ENCODE measurements at regions of chr3 and their contacts with region 1.

Region 1: GRCh38 chr3:86969500-86970189 is 21.3 kb downstream of the VGLL3 start:
- DNase-seq: peak; percentile 35
- H3K4me3 ChIP-seq: no peak overlapping the region
- H3K27ac ChIP-seq: no peak overlapping the region
- H3K4me1 ChIP-seq: no peaks in the 10 kb centered on the region
- H3K27me3 ChIP-seq: no peaks in the 10 kb centered on the region
- CTCF ChIP-seq: peak; percentile 72

Region 2: DNA sequence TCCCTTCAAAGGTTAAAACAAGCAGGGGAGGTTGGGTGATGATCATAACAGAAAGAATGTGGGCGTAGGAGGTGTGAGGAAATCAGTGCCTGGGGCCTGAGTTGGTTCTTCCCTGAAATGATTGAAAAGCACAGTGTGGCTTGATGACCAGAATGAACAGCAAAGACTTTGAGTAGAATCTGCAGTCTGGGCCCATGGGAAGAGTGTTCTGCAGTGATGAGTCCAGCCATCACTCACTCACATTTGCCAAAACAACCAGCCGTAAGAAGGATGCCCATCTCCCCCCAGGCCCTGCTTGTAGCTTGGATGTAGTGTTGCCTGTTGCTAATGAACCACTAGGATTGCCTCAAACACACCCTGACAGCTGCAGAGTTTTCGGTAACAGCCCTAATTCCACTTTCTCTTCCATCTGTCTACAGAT is 46.6 kb before region 1 on chr3:
- intact Hi-C with region 1: no loop called
- DNase-seq: no peak
- H3K4me3 ChIP-seq: no peak overlapping the region
- H3K27ac ChIP-seq: no peak overlapping the region
- H3K4me1 ChIP-seq: no peaks in the 10 kb centered on the region
- H3K27me3 ChIP-seq: no peaks in the 10 kb centered on the region
- CTCF ChIP-seq: no peak

Region 3: GRCh38 chr3:87082796-87083440 is 113.3 kb after region 1 on chr3:
- intact Hi-C with region 1: loop called (anchors 5 kb)
- DNase-seq: peak; percentile 31
- H3K4me3 ChIP-seq: no peak overlapping the region
- H3K27ac ChIP-seq: no peak overlapping the region
- H3K4me1 ChIP-seq: no peaks in the 10 kb centered on the region
- H3K27me3 ChIP-seq: no peaks in the 10 kb centered on the region
- CTCF ChIP-seq: no peak

Region 4: GRCh38 chr3:87167628-87168456 is 198.2 kb after region 1 on chr3:
- intact Hi-C with region 1: loop called (anchors 10 kb)
- DNase-seq: peak; percentile 45
- H3K4me3 ChIP-seq: peak overlapping the region; percentile 9
- H3K27ac ChIP-seq: no peak overlapping the region
- H3K4me1 ChIP-seq: no peaks in the 10 kb centered on the region
- H3K27me3 ChIP-seq: no peaks in the 10 kb centered on the region
- CTCF ChIP-seq: peak; percentile 66